ENCODE measurements at regions of chr9 and their contacts with region 1.

Region 1: GRCh38 chr9:134449221-134449894 is 123.1 kb downstream of the RXRA start:
- DNase-seq: peak; percentile 71 to 89
- H3K4me3 ChIP-seq: no peak overlapping the region
- H3K27ac ChIP-seq: no peak overlapping the region
- H3K4me1 ChIP-seq: no peaks in the 10 kb centered on the region
- H3K27me3 ChIP-seq: no peaks in the 10 kb centered on the region
- CTCF ChIP-seq: peak; percentile 75

Region 2: DNA sequence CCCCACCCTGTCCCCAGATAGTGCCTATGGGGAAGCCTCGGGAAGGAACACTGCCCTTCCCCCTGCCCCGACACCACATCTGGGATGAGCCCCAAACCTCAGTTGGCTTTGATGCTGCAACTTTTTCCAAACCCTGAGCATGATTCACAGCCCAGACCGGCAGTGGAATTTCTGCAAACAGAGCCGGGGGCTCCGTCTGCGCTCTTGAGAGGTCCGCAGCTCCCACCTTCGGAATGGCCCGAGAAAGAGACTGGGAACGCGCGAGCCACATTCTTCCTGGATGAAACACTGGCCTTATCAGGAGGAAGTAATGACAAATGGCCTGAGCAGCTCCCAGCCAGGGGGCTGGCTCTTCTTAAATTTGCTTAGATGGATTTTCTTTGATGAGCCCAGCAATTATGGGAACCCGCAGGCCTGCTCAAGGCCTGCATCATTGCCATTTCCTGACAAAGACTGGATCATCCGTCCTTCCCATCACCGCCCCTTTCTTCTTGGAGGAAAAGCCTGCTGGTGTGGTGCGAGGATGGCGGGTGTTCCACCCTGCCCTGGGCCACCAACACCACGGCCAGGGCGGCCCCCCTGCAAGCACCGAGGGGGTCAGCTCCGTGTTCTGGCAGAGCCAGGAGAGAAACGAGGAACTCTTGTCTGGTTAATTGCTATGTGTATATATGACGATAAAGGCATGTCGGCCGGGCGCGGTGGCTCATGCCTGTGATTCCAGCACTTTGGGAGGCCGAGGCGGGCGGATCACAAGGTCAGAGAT is 153.4 kb after region 1 on chr9:
- CTCF ChIA-PET with region 1: no interaction called
- POLR2A ChIA-PET with region 1: no interaction called
- intact Hi-C with region 1: loop called (anchors 2 kb)
- DNase-seq: peak; percentile 83 to 95
- H3K4me3 ChIP-seq: 0 out of 2 replicates have a peak overlapping the region, but pooled peaks have one; percentile 14
- H3K27ac ChIP-seq: peak overlapping the region; percentile 68
- H3K4me1 ChIP-seq: peaks cover 17% of the 10 kb centered on the region
- H3K27me3 ChIP-seq: no peaks in the 10 kb centered on the region; the same call in 1 of the 2 replicates
- CTCF ChIP-seq: no peak

Region 3: GRCh38 chr9:134641173-134641985 is 192.0 kb after region 1 on chr9 and contains the start of gene COL5A1:
- CTCF ChIA-PET with region 1: no interaction called
- POLR2A ChIA-PET with region 1: no interaction called
- intact Hi-C with region 1: loop called (anchors 2 kb)
- DNase-seq: peak in 1 of 2 experiments; percentile 96
- H3K4me3 ChIP-seq: peak within 1 kb of the TSS; percentile 41; the same call in 1 of the 2 replicates
- H3K27ac ChIP-seq: no peak within 1 kb of the TSS
- H3K4me1 ChIP-seq: no peaks in the 10 kb centered on the region
- H3K27me3 ChIP-seq: peaks cover 56% of the 10 kb centered on the region
- CTCF ChIP-seq: no peak
- total RNA-seq, gene COL5A1: 15.2 and 32.8 TPM in 2 replicates

Region 4: GRCh38 chr9:134656334-134657006 is 207.1 kb after region 1 on chr9:
- CTCF ChIA-PET with region 1: no interaction called
- POLR2A ChIA-PET with region 1: no interaction called
- intact Hi-C with region 1: loop called (anchors 1 kb)
- DNase-seq: no peak
- H3K4me3 ChIP-seq: no peak overlapping the region
- H3K27ac ChIP-seq: no peak overlapping the region
- H3K4me1 ChIP-seq: no peaks in the 10 kb centered on the region
- H3K27me3 ChIP-seq: no peaks in the 10 kb centered on the region; the same call in 1 of the 2 replicates
- CTCF ChIP-seq: peak; percentile 29; the same call in 1 of the 2 replicates

Region 5: GRCh38 chr9:134689321-134690181 is 240.2 kb after region 1 on chr9:
- CTCF ChIA-PET with region 1: no interaction called
- POLR2A ChIA-PET with region 1: no interaction called
- intact Hi-C with region 1: loop called (anchors 2 kb)
- DNase-seq: peak in 1 of 2 experiments; percentile 73
- H3K4me3 ChIP-seq: no peak overlapping the region
- H3K27ac ChIP-seq: no peak overlapping the region
- H3K4me1 ChIP-seq: no peaks in the 10 kb centered on the region
- H3K27me3 ChIP-seq: peaks cover 58% of the 10 kb centered on the region
- CTCF ChIP-seq: peak; percentile 80

Region 6: DNA sequence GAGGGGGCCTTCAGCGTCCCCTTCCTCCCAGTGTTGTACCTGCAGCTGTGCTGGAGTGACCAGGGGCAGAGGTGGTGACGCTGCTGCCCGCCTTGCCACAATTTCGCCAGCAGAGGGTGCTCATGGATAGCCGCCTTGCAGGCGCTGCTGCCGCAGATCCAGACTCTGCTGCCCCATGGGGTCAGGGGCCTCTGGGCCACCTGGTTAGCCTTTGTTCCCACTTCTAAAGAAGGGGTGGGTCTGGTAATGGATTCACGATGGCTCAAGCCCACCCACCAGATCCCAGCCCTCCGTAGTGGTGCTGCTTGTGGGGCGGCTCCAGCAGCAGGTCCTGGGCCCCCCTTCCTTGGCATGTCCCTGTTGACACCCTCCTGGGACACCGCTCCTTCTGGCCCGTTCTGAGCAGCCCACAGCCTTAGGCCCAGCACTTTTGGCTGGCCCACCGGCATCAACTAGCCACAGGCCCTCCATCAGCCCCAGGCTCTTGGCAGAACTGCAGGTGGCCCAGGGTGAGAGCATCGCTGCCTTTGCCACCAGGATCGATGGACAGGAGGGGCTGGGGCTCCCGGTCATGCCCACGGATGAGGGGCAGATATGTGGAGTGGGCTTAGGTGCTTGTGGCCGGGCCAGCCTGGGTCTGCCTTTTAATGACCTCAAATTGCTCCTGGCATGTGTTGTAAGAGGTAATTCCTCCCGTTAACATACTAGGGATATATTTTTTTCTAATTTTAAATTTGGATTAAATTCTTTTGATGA is 249.4 kb after region 1 on chr9:
- CTCF ChIA-PET with region 1: no interaction called
- POLR2A ChIA-PET with region 1: no interaction called
- intact Hi-C with region 1: loop called (anchors 1 kb)
- DNase-seq: peak in 1 of 2 experiments; percentile 69
- H3K4me3 ChIP-seq: no peak overlapping the region
- H3K27ac ChIP-seq: no peak overlapping the region
- H3K4me1 ChIP-seq: no peaks in the 10 kb centered on the region
- H3K27me3 ChIP-seq: peaks cover 56% of the 10 kb centered on the region
- CTCF ChIP-seq: peak; percentile 83

Region 7: DNA sequence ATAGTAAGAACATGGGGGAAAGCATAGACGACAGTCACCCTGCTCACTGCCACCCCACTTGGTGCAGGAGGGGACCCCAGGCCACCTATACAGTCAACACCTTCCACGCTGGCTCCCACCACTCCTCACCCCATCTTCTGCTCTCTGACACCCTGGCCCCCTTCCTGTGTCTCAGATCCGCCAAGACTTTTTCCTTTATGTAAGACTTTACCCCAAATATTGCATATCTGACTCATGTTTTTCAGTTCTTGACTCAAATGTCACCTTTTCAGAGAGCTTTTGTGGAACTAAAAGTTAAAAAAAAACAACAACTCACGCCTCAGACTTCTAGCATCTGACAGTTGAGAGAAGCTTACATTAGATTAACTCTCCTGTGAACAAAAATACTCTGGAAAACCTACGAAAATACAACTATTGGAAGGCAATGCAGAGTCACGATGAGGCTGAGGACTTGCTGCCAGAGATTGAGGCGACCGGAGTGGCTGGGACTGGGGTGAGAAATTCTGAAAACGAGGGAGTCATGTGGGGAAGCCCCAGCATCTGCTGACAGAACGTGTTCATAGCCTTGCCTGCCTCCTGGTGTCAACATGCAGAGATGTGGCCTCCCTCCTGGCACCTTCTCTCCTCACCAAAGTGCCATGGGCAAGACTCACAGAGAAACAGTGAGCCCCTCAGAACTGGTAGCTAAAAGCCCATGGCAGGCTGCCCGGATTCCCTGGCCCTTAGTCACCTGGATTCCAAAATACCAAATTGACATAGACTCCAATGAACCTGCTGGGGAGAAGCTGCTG is 408.9 kb after region 1 on chr9:
- CTCF ChIA-PET with region 1: no interaction called
- POLR2A ChIA-PET with region 1: no interaction called
- intact Hi-C with region 1: loop called (anchors 5 kb)
- DNase-seq: peak; percentile 38 to 64
- H3K4me3 ChIP-seq: no peak overlapping the region
- H3K27ac ChIP-seq: no peak overlapping the region
- H3K4me1 ChIP-seq: no peaks in the 10 kb centered on the region
- H3K27me3 ChIP-seq: peaks cover 77% of the 10 kb centered on the region
- CTCF ChIP-seq: no peak

Measured in PC-9 (cell line).